B cell (primary cell): ENCODE measurements at regions of chr13 and their contacts with region 1.

Region 1: DNA sequence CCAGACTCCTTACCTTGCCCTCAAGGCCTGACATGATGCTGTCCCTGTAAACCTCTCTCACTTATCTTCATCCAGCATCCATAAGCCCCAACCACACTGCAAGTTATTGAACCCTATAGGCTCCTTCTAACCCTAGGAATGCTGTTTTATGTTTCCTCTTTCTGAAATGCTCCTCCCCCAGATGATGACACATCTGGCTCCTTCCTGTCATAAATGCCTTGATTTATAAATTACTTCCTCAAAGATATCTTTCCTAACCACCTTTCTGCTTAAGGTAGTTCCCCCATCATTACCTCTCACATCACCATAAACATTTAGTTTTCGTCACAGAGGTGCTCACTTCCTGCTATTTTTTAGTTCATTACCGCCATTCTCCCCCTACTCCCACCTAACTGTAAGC is 12.3 kb downstream of the RUBCNL start:
- DNase-seq: peak; percentile 88
- ATAC-seq: peak; percentile 60
- H3K4me3 ChIP-seq: peak overlapping the region; percentile 7 to 44 (median 42)
- H3K4me3 Mint-ChIP-seq: peak overlapping the region; percentile 94
- H3K27ac ChIP-seq: peak overlapping the region; percentile 84 to 97
- H3K27ac Mint-ChIP-seq: peak overlapping the region; percentile 96
- H3K4me1 ChIP-seq: peaks cover 97 to 99% of the 10 kb centered on the region in 2 donors
- H3K4me1 Mint-ChIP-seq: peaks cover 87% of the 10 kb centered on the region
- H3K27me3 ChIP-seq: no peaks in the 10 kb centered on the region
- H3K27me3 Mint-ChIP-seq: no peaks in the 10 kb centered on the region
- CTCF ChIP-seq: no peak

Region 2: GRCh38 chr13:46211483-46212351 is 163.0 kb before region 1 on chr13 and contains the start of gene LRRC63:
- CTCF ChIA-PET with region 1: no interaction called
- POLR2A ChIA-PET with region 1: no interaction called
- intact Hi-C with region 1: no loop called
- DNase-seq: peak; percentile 76
- ATAC-seq: peak; percentile 99
- H3K4me3 ChIP-seq: peak within 1 kb of the TSS; percentile 47 to 85 (median 63)
- H3K4me3 Mint-ChIP-seq: peak within 1 kb of the TSS; percentile 87
- H3K27ac ChIP-seq: no peak within 1 kb of the TSS
- H3K27ac Mint-ChIP-seq: peak within 1 kb of the TSS; percentile 59
- H3K4me1 ChIP-seq: peaks cover 10 to 11% of the 10 kb centered on the region in 2 donors
- H3K4me1 Mint-ChIP-seq: peaks cover 16% of the 10 kb centered on the region
- H3K27me3 ChIP-seq: no peaks in the 10 kb centered on the region
- H3K27me3 Mint-ChIP-seq: peaks cover 2% of the 10 kb centered on the region
- CTCF ChIP-seq: no peak
- total RNA-seq, gene LRRC63: 0.25 TPM in 1 of 2 replicates, not detected in the other

Region 3: GRCh38 chr13:46354156-46355091 is 20.3 kb before region 1 on chr13:
- CTCF ChIA-PET with region 1: interaction called, 5 read pairs
- POLR2A ChIA-PET with region 1: interaction called, 11 read pairs
- intact Hi-C with region 1: loop called (anchors 2 kb)
- DNase-seq: no peak
- ATAC-seq: peak; percentile 24
- H3K4me3 ChIP-seq: no peak overlapping the region
- H3K4me3 Mint-ChIP-seq: no peak overlapping the region
- H3K27ac ChIP-seq: peak overlapping the region in 1 of 2 donors; percentile 53
- H3K27ac Mint-ChIP-seq: peak overlapping the region; percentile 43
- H3K4me1 ChIP-seq: no peaks in the 10 kb centered on the region
- H3K4me1 Mint-ChIP-seq: peaks cover 2% of the 10 kb centered on the region
- H3K27me3 ChIP-seq: no peaks in the 10 kb centered on the region
- H3K27me3 Mint-ChIP-seq: no peaks in the 10 kb centered on the region
- CTCF ChIP-seq: no peak